CD8-positive, alpha-beta memory T cell (primary cell): ENCODE measurements at regions of chr1 and their contacts with region 1.

Region 1: GRCh38 chr1:45011837-45012638 is at the start of gene UROD:
- DNase-seq: peak; percentile 79 to 93 (median 86)
- H3K4me3 ChIP-seq: peak within 1 kb of the TSS; percentile 66
- H3K4me3 Mint-ChIP-seq: peak within 1 kb of the TSS; percentile 89 to 98 (median 96)
- H3K27ac ChIP-seq: peak within 1 kb of the TSS; percentile 74
- H3K27ac Mint-ChIP-seq: peak within 1 kb of the TSS; percentile 86 to 99 (median 98)
- H3K4me1 ChIP-seq: peaks cover 31% of the 10 kb centered on the region
- H3K4me1 Mint-ChIP-seq: peaks cover 35 to 60% (median 55%) of the 10 kb centered on the region in 3 donors
- H3K27me3 ChIP-seq: no peaks in the 10 kb centered on the region
- H3K27me3 Mint-ChIP-seq: no peaks in the 10 kb centered on the region
- total RNA-seq, gene UROD: 89.9 to 92.4 TPM

Region 2: GRCh38 chr1:44730741-44731512 is 281.1 kb before region 1 on chr1 and contains the start of gene RNU5D-1:
- CTCF ChIA-PET with region 1: interaction called, 11 read pairs
- POLR2A ChIA-PET with region 1: interaction called, 4 read pairs
- DNase-seq: peak; percentile 88 to 94 (median 90)
- H3K4me3 ChIP-seq: peak within 1 kb of the TSS; percentile 37
- H3K4me3 Mint-ChIP-seq: peak within 1 kb of the TSS; percentile 63 to 86 (median 78)
- H3K27ac ChIP-seq: peak within 1 kb of the TSS; percentile 97
- H3K27ac Mint-ChIP-seq: peak within 1 kb of the TSS; percentile 96 to 100 (median 100)
- H3K4me1 ChIP-seq: peaks cover 14% of the 10 kb centered on the region
- H3K4me1 Mint-ChIP-seq: peaks cover 19 to 36% (median 28%) of the 10 kb centered on the region in 3 donors
- H3K27me3 ChIP-seq: no peaks in the 10 kb centered on the region
- H3K27me3 Mint-ChIP-seq: no peaks in the 10 kb centered on the region
- total RNA-seq, gene RNU5D-1: not detected

Region 3: GRCh38 chr1:44786138-44786840 is 225.7 kb before region 1 on chr1:
- CTCF ChIA-PET with region 1: interaction called, 39 read pairs
- POLR2A ChIA-PET with region 1: interaction called, 4 read pairs
- DNase-seq: peak; percentile 71 to 83 (median 77)
- H3K4me3 ChIP-seq: peak overlapping the region; percentile 74
- H3K4me3 Mint-ChIP-seq: peak overlapping the region; percentile 76 to 93 (median 81)
- H3K27ac ChIP-seq: no peak overlapping the region
- H3K27ac Mint-ChIP-seq: peak overlapping the region; percentile 77 to 98 (median 87)
- H3K4me1 ChIP-seq: peaks cover 29% of the 10 kb centered on the region
- H3K4me1 Mint-ChIP-seq: peaks cover 27 to 36% (median 30%) of the 10 kb centered on the region in 3 donors
- H3K27me3 ChIP-seq: no peaks in the 10 kb centered on the region
- H3K27me3 Mint-ChIP-seq: no peaks in the 10 kb centered on the region

Region 4: DNA sequence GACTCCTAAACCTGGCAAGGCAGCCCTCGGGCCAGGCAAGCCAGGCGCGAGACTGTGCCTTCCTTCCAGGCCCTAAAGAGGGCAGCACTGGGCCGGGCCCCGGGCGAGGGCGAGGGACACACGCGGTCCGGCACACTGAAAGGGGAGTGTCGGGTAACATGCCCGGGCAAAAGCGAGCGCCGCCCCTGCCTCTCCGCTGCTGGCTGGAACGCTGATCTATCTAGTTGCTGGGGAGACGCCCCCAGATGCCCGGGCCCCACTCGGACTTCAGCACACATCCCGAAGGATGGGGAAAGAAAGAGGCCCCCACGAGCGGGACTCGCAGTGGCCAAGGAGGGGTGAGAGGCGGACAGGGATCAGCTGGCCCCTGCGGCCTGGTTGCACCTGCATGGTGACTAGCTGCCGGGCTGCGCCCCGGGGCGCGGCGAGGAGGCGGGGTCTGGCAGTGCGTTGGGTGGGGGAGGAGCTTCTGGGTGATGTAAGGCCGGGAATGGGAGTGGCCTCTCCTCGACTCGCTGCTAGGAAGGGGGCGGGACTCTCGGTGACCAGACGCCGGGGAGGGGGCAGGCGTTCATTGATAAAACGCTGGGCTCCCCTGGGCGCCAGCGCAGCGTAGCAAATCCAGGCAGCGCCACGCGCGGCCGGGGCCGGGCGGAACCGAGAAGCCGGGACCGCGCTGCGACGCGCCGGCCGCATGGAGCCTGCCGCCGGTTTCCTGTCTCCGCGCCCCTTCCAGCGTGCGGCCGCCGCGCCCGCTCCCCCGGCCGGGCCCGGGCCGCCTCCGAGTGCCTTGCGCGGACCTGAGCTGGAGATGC is 212.1 kb before region 1 on chr1 and contains the start of gene PLK3:
- CTCF ChIA-PET with region 1: interaction called, 8 read pairs
- POLR2A ChIA-PET with region 1: interaction called, 20 read pairs
- DNase-seq: peak; percentile 97 to 99 (median 98)
- H3K4me3 ChIP-seq: peak within 1 kb of the TSS; percentile 90
- H3K4me3 Mint-ChIP-seq: peak within 1 kb of the TSS; percentile 80 to 98 (median 96)
- H3K27ac ChIP-seq: peak within 1 kb of the TSS; percentile 93
- H3K27ac Mint-ChIP-seq: peak within 1 kb of the TSS; percentile 90 to 99 (median 98)
- H3K4me1 ChIP-seq: peaks cover 31% of the 10 kb centered on the region
- H3K4me1 Mint-ChIP-seq: peaks cover 25 to 41% (median 38%) of the 10 kb centered on the region in 3 donors
- H3K27me3 ChIP-seq: no peaks in the 10 kb centered on the region
- H3K27me3 Mint-ChIP-seq: no peaks in the 10 kb centered on the region
- total RNA-seq, gene PLK3: 104 to 114 TPM

Region 5: GRCh38 chr1:44819608-44820327 is 192.3 kb before region 1 on chr1:
- CTCF ChIA-PET with region 1: interaction called, 5 read pairs
- POLR2A ChIA-PET with region 1: interaction called, 11 read pairs
- DNase-seq: peak; percentile 65 to 89 (median 85)
- H3K4me3 ChIP-seq: peak overlapping the region; percentile 72
- H3K4me3 Mint-ChIP-seq: peak overlapping the region; percentile 91 to 98 (median 95)
- H3K27ac ChIP-seq: peak overlapping the region; percentile 99
- H3K27ac Mint-ChIP-seq: peak overlapping the region; percentile 100
- H3K4me1 ChIP-seq: peaks cover 14% of the 10 kb centered on the region
- H3K4me1 Mint-ChIP-seq: peaks cover 32 to 44% (median 40%) of the 10 kb centered on the region in 3 donors
- H3K27me3 ChIP-seq: no peaks in the 10 kb centered on the region
- H3K27me3 Mint-ChIP-seq: no peaks in the 10 kb centered on the region

Region 6: DNA sequence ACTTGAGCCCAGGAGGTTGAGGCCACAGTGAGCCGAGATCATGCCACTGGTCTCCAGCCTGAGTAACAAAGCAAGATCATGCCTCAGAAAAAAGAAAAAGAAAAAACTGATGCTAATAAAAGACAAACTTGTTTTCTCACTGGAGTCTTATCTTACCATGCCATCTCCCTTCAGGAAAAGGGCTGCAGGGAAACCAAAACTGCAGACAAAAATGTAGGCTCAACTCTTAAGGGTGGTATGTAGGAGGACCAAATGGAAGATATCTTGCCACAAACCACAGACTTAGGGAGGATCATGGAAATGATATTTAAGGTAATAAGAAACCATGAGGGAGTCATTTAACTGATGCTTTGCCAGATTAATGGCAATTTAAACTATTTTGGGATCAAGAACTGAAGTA is 32.9 kb after region 1 on chr1:
- CTCF ChIA-PET with region 1: no interaction called
- POLR2A ChIA-PET with region 1: no interaction called
- DNase-seq: no peak
- H3K4me3 ChIP-seq: no peak overlapping the region
- H3K4me3 Mint-ChIP-seq: no peak overlapping the region
- H3K27ac ChIP-seq: no peak overlapping the region
- H3K27ac Mint-ChIP-seq: no peak overlapping the region
- H3K4me1 ChIP-seq: no peaks in the 10 kb centered on the region
- H3K4me1 Mint-ChIP-seq: peaks cover 0 to 6% (median 0%) of the 10 kb centered on the region in 3 donors
- H3K27me3 ChIP-seq: no peaks in the 10 kb centered on the region
- H3K27me3 Mint-ChIP-seq: no peaks in the 10 kb centered on the region

Region 7: DNA sequence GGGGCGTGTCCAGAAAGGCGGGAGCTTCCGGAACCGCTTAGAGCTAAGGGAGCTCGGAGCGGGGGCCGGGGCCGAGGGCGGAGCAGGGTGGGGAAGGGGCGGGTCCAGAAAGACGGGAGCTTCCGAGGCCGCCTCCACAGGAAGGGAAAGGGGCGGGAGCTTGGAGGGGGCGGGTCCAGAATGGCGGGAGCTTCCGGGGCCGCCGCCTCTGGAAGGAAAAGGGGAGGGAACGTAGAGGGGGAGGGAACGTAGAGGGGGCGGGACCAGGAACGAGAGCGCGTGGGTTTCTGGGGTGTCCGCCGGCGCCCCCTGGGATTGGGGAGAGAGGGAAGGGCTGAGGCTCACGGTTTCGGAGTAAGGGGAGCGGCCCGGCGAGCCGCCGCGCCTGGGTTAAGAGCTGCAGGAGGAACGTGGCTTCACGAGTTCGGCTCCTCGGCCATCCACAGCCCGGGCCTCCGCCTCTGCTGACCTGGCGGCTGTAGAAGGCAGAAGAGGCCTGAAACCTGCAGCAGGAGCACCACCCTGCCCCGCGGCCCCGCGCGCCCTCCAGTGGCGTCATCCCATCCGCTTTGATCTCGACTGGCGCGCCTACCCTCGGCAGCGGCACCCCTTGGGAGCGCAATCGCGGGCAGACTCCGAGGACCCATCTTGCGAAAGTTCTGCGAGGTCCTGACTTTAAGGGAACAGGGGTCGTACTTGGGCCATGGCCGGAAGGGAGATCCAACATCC is 291.7 kb after region 1 on chr1:
- CTCF ChIA-PET with region 1: interaction called, 173 read pairs
- POLR2A ChIA-PET with region 1: interaction called, 55 read pairs
- DNase-seq: peak; percentile 93 to 98 (median 96)
- H3K4me3 ChIP-seq: peak overlapping the region; percentile 63
- H3K4me3 Mint-ChIP-seq: peak overlapping the region; percentile 90 to 97 (median 91)
- H3K27ac ChIP-seq: peak overlapping the region; percentile 88
- H3K27ac Mint-ChIP-seq: peak overlapping the region; percentile 94 to 99 (median 97)
- H3K4me1 ChIP-seq: peaks cover 8% of the 10 kb centered on the region
- H3K4me1 Mint-ChIP-seq: peaks cover 15 to 37% (median 30%) of the 10 kb centered on the region in 3 donors
- H3K27me3 ChIP-seq: no peaks in the 10 kb centered on the region
- H3K27me3 Mint-ChIP-seq: peaks cover 0 to 3% of the 10 kb centered on the region in 2 donors

Region 8: GRCh38 chr1:45490626-45491486 is 478.8 kb after region 1 on chr1 and contains the start of gene TESK2:
- CTCF ChIA-PET with region 1: interaction called, 63 read pairs
- POLR2A ChIA-PET with region 1: interaction called, 16 read pairs
- DNase-seq: peak; percentile 92 to 99 (median 98)
- H3K4me3 ChIP-seq: peak within 1 kb of the TSS; percentile 72
- H3K4me3 Mint-ChIP-seq: no peak within 1 kb of the TSS
- H3K27ac ChIP-seq: peak within 1 kb of the TSS; percentile 28
- H3K27ac Mint-ChIP-seq: no peak within 1 kb of the TSS
- H3K4me1 ChIP-seq: peaks cover 14% of the 10 kb centered on the region
- H3K4me1 Mint-ChIP-seq: peaks cover 6 to 11% (median 8%) of the 10 kb centered on the region in 3 donors
- H3K27me3 ChIP-seq: no peaks in the 10 kb centered on the region
- H3K27me3 Mint-ChIP-seq: no peaks in the 10 kb centered on the region
- total RNA-seq, gene TESK2: 2.9 to 3.6 TPM